ENCODE measurements at regions of chr1 and their contacts with region 1.

Region 1: DNA sequence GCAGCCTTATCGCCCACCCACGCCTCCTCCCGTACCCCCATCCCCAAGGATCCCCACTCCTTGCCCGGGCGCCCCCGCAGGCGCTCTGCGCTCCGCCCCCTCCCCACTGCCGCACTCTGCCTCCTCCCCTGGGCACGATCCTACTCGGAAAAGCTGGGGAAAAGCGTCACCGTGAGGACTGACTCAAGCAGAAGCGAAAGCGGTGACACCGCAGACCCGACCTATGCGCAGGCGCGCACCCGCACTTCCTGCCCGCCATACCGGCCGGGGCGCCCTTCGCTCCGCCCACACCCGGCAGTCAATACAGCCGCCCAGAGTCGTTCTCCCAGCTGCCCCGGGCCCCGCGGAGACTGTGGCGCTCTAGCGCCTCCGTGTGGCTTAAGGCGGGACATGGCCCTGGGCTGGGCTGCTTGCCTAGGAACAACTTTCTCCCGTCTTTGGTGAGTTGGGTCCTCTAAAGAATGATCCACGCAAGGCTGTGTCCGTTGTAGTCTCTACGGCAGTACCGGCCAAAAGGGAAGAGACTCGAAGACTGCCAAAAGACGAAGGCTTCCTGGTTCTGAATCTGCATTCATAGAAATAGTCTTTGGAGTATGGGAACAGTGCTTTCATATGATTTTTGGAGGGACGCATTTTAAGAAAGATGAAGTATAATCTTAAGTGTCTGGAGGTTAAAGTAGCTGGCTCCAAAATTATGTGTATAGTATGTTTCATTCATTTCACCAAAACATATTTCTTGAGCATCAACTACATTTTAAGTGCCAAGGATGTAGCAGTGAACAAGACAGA is at the start of gene OMA1:
- DNase-seq: peak; percentile 98
- H3K4me3 Mint-ChIP-seq: peak within 1 kb of the TSS; percentile 91
- H3K27ac Mint-ChIP-seq: peak within 1 kb of the TSS; percentile 97
- H3K4me1 Mint-ChIP-seq: peaks cover 13% of the 10 kb centered on the region
- H3K27me3 Mint-ChIP-seq: no peaks in the 10 kb centered on the region
- total RNA-seq, gene OMA1: 15.4 to 16.6 TPM

Region 2: DNA sequence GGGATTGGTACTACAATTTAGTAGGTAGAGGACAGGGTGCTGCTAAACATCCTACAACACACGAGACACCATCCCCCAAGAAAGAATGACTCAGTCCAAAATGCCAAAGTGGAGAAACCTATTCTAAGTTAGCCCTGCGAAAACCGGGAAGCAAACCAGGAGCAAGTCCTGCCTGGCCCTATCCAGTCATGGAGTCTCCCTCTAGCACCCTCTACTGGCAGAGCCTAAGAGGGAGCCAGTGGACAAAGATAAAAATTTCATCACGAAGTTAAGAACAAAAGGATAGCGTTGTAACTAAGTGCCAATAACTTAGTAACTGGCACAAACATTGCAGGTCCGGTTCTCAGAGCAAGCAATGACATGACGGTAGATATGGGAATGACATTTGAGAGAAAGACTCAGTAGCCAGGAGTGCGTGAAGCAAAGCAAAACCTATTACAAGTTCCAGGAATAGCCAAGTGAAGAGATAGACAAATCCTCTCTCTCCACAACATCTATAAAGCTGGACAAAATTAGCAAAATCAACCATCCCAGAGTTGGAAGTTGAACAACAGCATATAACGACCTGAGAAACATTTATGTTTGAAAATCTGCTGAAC is 383.7 kb before region 1 on chr1:
- CTCF ChIA-PET with region 1: no interaction called
- intact Hi-C with region 1: loop called (anchors 5 kb)
- DNase-seq: peak; percentile 38
- H3K4me3 Mint-ChIP-seq: no peak overlapping the region
- H3K27ac Mint-ChIP-seq: no peak overlapping the region
- H3K4me1 Mint-ChIP-seq: no peaks in the 10 kb centered on the region
- H3K27me3 Mint-ChIP-seq: no peaks in the 10 kb centered on the region

Region 3: DNA sequence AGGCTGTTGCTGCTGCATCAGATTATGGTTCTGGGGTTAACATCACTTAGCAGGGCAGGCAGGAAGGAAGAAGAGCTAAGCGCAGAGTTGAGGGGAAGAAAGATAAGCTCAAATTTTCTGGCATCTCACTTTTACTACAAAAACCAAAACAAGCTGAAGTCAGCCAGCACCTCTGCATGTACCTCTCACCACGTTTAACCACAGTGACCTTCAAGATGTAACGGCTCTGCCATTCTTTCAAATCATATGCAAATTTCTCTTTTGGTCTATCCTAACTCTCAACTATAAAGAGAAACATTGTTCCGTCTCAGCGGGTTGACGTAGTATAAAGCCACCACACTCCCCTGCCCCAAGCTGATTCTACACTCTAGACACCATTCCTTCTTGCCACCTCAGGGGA is 154.6 kb before region 1 on chr1:
- CTCF ChIA-PET with region 1: interaction called, 4 read pairs
- intact Hi-C with region 1: loop called (anchors 1 kb)
- DNase-seq: peak; percentile 37
- H3K4me3 Mint-ChIP-seq: no peak overlapping the region
- H3K27ac Mint-ChIP-seq: no peak overlapping the region
- H3K4me1 Mint-ChIP-seq: no peaks in the 10 kb centered on the region
- H3K27me3 Mint-ChIP-seq: no peaks in the 10 kb centered on the region

Region 4: DNA sequence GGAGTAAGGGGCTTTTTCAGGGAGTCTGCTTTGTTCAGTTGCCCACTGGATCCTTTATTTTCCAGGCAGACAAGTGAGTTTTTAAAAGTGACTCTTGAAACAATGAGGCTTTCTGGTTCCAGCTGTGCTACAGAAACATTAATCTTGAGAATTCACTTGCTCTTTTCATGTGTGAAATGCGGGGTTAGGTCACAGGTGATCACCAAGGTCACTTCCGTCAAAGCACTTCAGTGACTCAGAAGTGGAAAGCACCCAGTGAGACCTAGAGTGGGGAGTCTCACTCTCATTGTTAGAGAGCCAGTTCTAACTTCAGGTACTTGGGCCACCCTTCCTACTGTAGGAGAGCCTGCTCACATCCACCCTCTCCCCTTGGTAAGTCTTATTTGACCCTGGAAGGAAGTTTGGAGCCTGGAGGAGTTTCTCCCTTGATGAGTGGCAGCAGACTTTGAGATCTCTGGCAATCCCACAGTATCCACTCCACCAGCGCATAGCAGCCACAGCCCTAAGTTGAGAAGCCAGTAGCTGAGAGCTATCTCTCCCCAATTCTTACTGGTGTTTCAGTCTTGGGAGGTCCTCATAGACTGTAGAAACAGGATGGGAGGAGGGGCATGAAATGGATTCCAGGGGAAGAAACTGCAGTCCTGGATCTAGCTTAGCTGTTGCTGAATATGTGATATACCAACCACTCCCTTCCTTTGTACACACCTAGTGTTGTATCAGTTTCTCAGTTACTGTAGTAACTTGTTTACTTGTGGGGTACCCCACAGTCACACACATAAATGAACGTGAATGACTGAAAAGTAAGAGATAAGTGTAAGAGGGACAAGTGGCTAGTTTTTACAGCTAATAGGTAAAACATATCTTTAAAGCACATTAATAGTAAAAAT is 27.2 kb after region 1 on chr1:
- CTCF ChIA-PET with region 1: interaction called, 3 read pairs
- intact Hi-C with region 1: loop called (anchors 1 kb)
- DNase-seq: peak; percentile 72
- H3K4me3 Mint-ChIP-seq: no peak overlapping the region
- H3K27ac Mint-ChIP-seq: peak overlapping the region; percentile 11
- H3K4me1 Mint-ChIP-seq: peaks cover 33% of the 10 kb centered on the region
- H3K27me3 Mint-ChIP-seq: peaks cover 44% of the 10 kb centered on the region

Region 5: GRCh38 chr1:58755468-58755872 is 208.8 kb after region 1 on chr1:
- CTCF ChIA-PET with region 1: interaction called, 5 read pairs
- intact Hi-C with region 1: loop called (anchors 1 kb)
- DNase-seq: peak; percentile 86
- H3K4me3 Mint-ChIP-seq: no peak overlapping the region
- H3K27ac Mint-ChIP-seq: peak overlapping the region; percentile 71
- H3K4me1 Mint-ChIP-seq: peaks cover 41% of the 10 kb centered on the region
- H3K27me3 Mint-ChIP-seq: no peaks in the 10 kb centered on the region

Region 6: DNA sequence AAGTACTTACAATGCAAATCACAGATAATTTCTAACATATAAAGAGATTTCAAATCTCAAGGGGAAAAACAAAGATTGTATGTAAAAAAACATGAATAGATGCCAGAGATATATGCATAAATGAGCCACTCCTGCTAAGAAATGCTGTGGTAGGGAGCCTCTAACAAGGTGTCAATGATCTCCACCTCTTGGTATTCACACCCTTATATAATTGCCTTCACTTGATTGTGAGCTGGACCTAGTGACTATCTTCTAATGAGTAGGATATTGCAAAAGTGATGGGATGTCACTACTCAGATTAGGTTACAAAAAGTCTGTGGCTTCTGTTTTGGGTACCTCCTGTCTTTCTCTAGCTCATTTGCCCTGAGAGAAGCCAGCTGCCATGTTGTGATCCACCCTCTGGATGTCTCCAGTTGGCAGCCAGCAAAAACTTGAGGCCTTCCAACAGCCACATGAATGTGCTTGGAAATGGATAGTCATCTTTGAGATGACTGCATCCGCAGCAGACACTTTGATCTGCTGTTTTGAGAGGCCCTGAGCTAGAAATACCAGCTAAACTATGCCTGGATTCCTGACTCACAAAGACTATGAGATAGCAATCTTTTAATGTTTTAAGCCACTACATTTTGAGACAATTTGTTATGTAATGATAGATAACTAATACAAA is 554.1 kb after region 1 on chr1:
- CTCF ChIA-PET with region 1: no interaction called
- intact Hi-C with region 1: no loop called
- DNase-seq: no peak
- H3K4me3 Mint-ChIP-seq: no peak overlapping the region
- H3K27ac Mint-ChIP-seq: no peak overlapping the region
- H3K4me1 Mint-ChIP-seq: no peaks in the 10 kb centered on the region
- H3K27me3 Mint-ChIP-seq: no peaks in the 10 kb centered on the region

Measured in activated naive CD4-positive, alpha-beta T cell treated with anti-CD3 and anti-CD28 coated beads for 36 hours (primary cell).